ENCODE measurements at regions of chr1 and their contacts with region 1.

Region 1: GRCh38 chr1:161771973-161772372 is 5.9 kb downstream of the ATF6 start:
- DNase-seq: no peak
- ATAC-seq: peak; percentile 22 to 40 (median 28)
- H3K4me3 ChIP-seq: no peak overlapping the region
- H3K4me3 Mint-ChIP-seq: no peak overlapping the region
- H3K27ac ChIP-seq: peak overlapping the region; percentile 30
- H3K27ac Mint-ChIP-seq: no peak overlapping the region
- H3K4me1 ChIP-seq: peaks cover 42 to 55% of the 10 kb centered on the region in 2 experiments
- H3K4me1 Mint-ChIP-seq: peaks cover 21 to 34% (median 25%) of the 10 kb centered on the region in 3 donors
- H3K27me3 ChIP-seq: no peaks in the 10 kb centered on the region
- H3K27me3 Mint-ChIP-seq: no peaks in the 10 kb centered on the region

Region 2: GRCh38 chr1:161816201-161816600 is 44.2 kb after region 1 on chr1:
- CTCF ChIA-PET with region 1: no interaction called
- POLR2A ChIA-PET with region 1: interaction called in 1 of 2 experiments, 10 read pairs
- DNase-seq: no peak
- ATAC-seq: no peak
- H3K4me3 ChIP-seq: no peak overlapping the region
- H3K4me3 Mint-ChIP-seq: no peak overlapping the region
- H3K27ac ChIP-seq: no peak overlapping the region
- H3K27ac Mint-ChIP-seq: no peak overlapping the region
- H3K4me1 ChIP-seq: no peaks in the 10 kb centered on the region
- H3K4me1 Mint-ChIP-seq: peaks cover 4 to 7% (median 6%) of the 10 kb centered on the region in 3 donors
- H3K27me3 ChIP-seq: no peaks in the 10 kb centered on the region
- H3K27me3 Mint-ChIP-seq: no peaks in the 10 kb centered on the region